Aorta (tissue), 5 donors: ENCODE measurements at regions of chr18 and their contacts with region 1.

Region 1: GRCh38 chr18:9102508-9103375 is at the start of gene NDUFV2:
- DNase-seq: peak; percentile 98 to 99
- ATAC-seq: peak; percentile 100
- H3K4me3 ChIP-seq: peak within 1 kb of the TSS; percentile 93 to 97
- H3K27ac ChIP-seq: peak within 1 kb of the TSS; percentile 76 to 96
- H3K4me1 ChIP-seq: peaks cover 4 to 5% of the 10 kb centered on the region in 2 donors
- H3K27me3 ChIP-seq: no peaks in the 10 kb centered on the region
- total RNA-seq, gene NDUFV2: 83.8 to 112 TPM

Region 2: DNA sequence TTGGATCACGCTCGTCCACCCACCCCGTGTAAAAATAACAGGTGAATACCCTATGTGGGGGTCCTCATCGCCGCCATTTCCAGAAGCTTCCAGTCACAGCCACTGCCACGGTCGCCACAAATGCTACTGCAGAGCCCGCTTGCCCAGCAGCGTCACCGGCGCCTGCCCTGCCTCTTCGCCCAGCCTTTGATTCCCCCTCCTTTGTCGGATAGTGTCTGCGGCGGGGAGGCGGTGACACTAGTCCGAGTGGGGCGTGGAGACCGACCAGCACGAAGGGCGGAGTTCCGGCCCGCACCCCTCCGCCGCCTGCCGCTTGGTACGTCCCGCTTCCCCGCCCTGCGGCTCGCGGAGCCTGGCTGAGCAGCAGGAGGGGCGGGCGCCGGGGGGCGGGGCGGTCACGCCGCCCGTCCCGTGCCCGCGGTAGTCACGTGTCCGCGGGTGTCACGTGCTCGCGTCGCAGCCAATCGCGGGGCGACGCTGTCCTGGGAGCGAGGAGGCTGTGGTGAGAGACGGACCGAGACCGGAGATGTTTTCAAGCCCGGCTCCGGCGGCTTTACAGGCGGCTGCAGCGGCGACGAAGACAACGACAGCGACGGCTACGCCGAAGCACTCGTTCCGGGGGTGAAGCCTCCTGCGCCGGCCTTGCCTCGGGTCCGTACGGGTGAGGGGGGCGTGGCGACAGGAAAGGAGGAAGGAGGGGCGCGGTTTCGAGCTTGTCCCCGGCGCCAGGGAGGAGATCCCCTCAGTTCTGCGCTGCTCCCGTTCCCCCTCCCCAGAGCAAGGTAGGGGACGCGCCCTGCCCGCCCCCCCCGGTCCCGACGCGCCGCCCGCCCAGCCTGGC is 33.8 kb after region 1 on chr18 and contains the start of gene ANKRD12:
- intact Hi-C with region 1: loop called (anchors 1 to 5 kb)
- DNase-seq: peak; percentile 98 to 99
- ATAC-seq: peak; percentile 98
- H3K4me3 ChIP-seq: peak within 1 kb of the TSS; percentile 78 to 96
- H3K27ac ChIP-seq: peak within 1 kb of the TSS; percentile 96 to 100
- H3K4me1 ChIP-seq: peaks cover 0 to 4% of the 10 kb centered on the region in 2 donors
- H3K27me3 ChIP-seq: no peaks in the 10 kb centered on the region
- total RNA-seq, gene ANKRD12: 86.5 to 112 TPM

Region 3: GRCh38 chr18:9184998-9185613 is 82.4 kb after region 1 on chr18:
- intact Hi-C with region 1: no loop called
- DNase-seq: no peak
- ATAC-seq: no peak
- H3K4me3 ChIP-seq: no peak overlapping the region
- H3K27ac ChIP-seq: no peak overlapping the region
- H3K4me1 ChIP-seq: peaks cover 1 to 9% of the 10 kb centered on the region in 2 donors
- H3K27me3 ChIP-seq: no peaks in the 10 kb centered on the region